PC-9 (cell line): ENCODE measurements at regions of chr19 and their contacts with region 1.

Region 1: GRCh38 chr19:11482384-11483050 is 1.7 kb upstream of the ELAVL3 start:
- DNase-seq: peak; percentile 47 to 73
- H3K4me3 ChIP-seq: no peak overlapping the region
- H3K27ac ChIP-seq: no peak overlapping the region
- H3K4me1 ChIP-seq: no peaks in the 10 kb centered on the region
- H3K27me3 ChIP-seq: no peaks in the 10 kb centered on the region
- CTCF ChIP-seq: peak; percentile 95

Region 2: GRCh38 chr19:11452620-11453310 is 29.8 kb before region 1 on chr19:
- CTCF ChIA-PET with region 1: no interaction called
- POLR2A ChIA-PET with region 1: interaction called, 11 read pairs
- intact Hi-C with region 1: no loop called
- DNase-seq: no peak
- H3K4me3 ChIP-seq: no peak overlapping the region
- H3K27ac ChIP-seq: no peak overlapping the region
- H3K4me1 ChIP-seq: no peaks in the 10 kb centered on the region
- H3K27me3 ChIP-seq: no peaks in the 10 kb centered on the region
- CTCF ChIP-seq: no peak; the same call in 1 of the 2 replicates

Region 3: GRCh38 chr19:11673608-11674041 is 191.1 kb after region 1 on chr19:
- CTCF ChIA-PET with region 1: no interaction called
- POLR2A ChIA-PET with region 1: no interaction called
- intact Hi-C with region 1: no loop called
- DNase-seq: peak in 1 of 2 experiments; percentile 28
- H3K4me3 ChIP-seq: no peak overlapping the region
- H3K27ac ChIP-seq: no peak overlapping the region
- H3K4me1 ChIP-seq: no peaks in the 10 kb centered on the region
- H3K27me3 ChIP-seq: no peaks in the 10 kb centered on the region
- CTCF ChIP-seq: peak; percentile 62